CD4-positive, alpha-beta T cell (primary cell): ENCODE measurements at regions of chr2 and their contacts with region 1.

Region 1: DNA sequence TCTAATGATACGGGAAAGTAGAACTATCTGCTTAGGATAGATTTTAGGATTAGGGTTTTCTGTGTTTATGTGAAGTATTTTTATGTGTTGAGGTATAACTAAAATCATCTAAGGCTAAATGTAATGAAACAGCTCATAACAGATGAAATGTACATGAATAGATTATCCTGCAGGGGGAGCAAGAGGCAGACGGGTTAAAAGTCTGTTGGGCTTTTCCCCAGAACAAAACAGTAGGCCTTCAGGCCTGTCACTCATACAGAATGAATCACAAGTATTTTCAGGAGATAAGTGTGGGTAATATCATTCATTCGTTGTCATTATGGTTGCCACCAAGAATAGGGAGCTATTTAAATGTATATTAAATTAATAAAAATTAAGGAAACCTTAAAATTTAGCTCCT is 107.9 kb upstream of the IL1R2 start:
- DNase-seq: peak in 5 of 14 experiments; percentile 5 to 65 (median 40)
- ATAC-seq: peak; percentile 48
- H3K4me3 ChIP-seq: no peak overlapping the region
- H3K4me3 Mint-ChIP-seq: no peak overlapping the region
- H3K27ac ChIP-seq: no peak overlapping the region
- H3K27ac Mint-ChIP-seq: no peak overlapping the region
- H3K4me1 ChIP-seq: no peaks in the 10 kb centered on the region
- H3K4me1 Mint-ChIP-seq: peaks cover 5% of the 10 kb centered on the region
- H3K27me3 ChIP-seq: no peaks in the 10 kb centered on the region
- H3K27me3 Mint-ChIP-seq: no peaks in the 10 kb centered on the region
- CTCF ChIP-seq: peak; percentile 56

Region 2: DNA sequence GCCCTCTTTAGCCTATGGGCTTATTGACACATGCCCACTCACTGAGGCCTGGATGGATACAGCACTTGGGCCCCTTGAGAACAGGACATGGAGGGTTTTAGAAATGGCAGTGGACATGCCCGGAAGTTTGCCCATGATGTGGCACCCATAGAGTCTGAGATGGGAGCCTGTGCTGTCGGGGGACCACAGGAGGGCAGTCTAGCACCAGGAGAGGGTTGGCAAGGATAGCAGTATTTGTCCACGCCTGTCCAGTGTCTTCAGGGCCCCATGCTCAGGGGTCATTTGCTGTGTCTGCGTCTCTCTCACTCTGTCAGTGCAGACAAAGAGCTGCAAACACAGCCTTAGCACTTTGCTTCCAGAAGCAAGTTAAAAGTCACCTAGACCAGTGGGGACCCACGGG is 351.6 kb after region 1 on chr2:
- CTCF ChIA-PET with region 1: interaction called, 16 read pairs
- POLR2A ChIA-PET with region 1: interaction called, 5 read pairs
- intact Hi-C with region 1: loop called (anchors 1 to 5 kb)
- DNase-seq: peak in 4 of 14 experiments; percentile 25 to 41 (median 28)
- ATAC-seq: no peak
- H3K4me3 ChIP-seq: no peak overlapping the region
- H3K4me3 Mint-ChIP-seq: no peak overlapping the region
- H3K27ac ChIP-seq: no peak overlapping the region
- H3K27ac Mint-ChIP-seq: no peak overlapping the region
- H3K4me1 ChIP-seq: peaks cover 16% of the 10 kb centered on the region
- H3K4me1 Mint-ChIP-seq: peaks cover 1% of the 10 kb centered on the region
- H3K27me3 ChIP-seq: no peaks in the 10 kb centered on the region
- H3K27me3 Mint-ChIP-seq: no peaks in the 10 kb centered on the region
- CTCF ChIP-seq: no peak

Region 3: GRCh38 chr2:102449370-102449974 is 565.6 kb after region 1 on chr2:
- CTCF ChIA-PET with region 1: no interaction called
- POLR2A ChIA-PET with region 1: no interaction called
- intact Hi-C with region 1: loop called (anchors 2 to 5 kb)
- DNase-seq: peak; percentile 44 to 74 (median 56)
- ATAC-seq: no peak
- H3K4me3 ChIP-seq: no peak overlapping the region
- H3K4me3 Mint-ChIP-seq: no peak overlapping the region
- H3K27ac ChIP-seq: no peak overlapping the region
- H3K27ac Mint-ChIP-seq: no peak overlapping the region
- H3K4me1 ChIP-seq: no peaks in the 10 kb centered on the region
- H3K4me1 Mint-ChIP-seq: peaks cover 8% of the 10 kb centered on the region
- H3K27me3 ChIP-seq: no peaks in the 10 kb centered on the region
- H3K27me3 Mint-ChIP-seq: no peaks in the 10 kb centered on the region
- CTCF ChIP-seq: peak; percentile 77